CD4-positive, alpha-beta memory T cell (primary cell): ENCODE measurements at regions of chr7 and their contacts with region 1.

Region 1: GRCh38 chr7:39589323-39590111 is 23.3 kb downstream of the YAE1 start:
- DNase-seq: peak; percentile 62 to 94 (median 68)
- H3K4me3 ChIP-seq: no peak overlapping the region
- H3K4me3 Mint-ChIP-seq: peak overlapping the region in 7 of 8 donors; percentile 19 to 73 (median 52)
- H3K27ac ChIP-seq: no peak overlapping the region
- H3K27ac Mint-ChIP-seq: peak overlapping the region; percentile 63 to 92 (median 78)
- H3K4me1 ChIP-seq: peaks cover 34% of the 10 kb centered on the region
- H3K4me1 Mint-ChIP-seq: peaks cover 15 to 47% (median 18%) of the 10 kb centered on the region in 4 donors
- H3K27me3 ChIP-seq: no peaks in the 10 kb centered on the region
- H3K27me3 Mint-ChIP-seq: no peaks in the 10 kb centered on the region

Region 2: GRCh38 chr7:39609113-39609934 is 19.8 kb after region 1 on chr7:
- CTCF ChIA-PET with region 1: interaction called, 3 read pairs
- POLR2A ChIA-PET with region 1: interaction called, 8 read pairs
- intact Hi-C with region 1: loop called (anchors 2 kb)
- DNase-seq: no peak
- H3K4me3 ChIP-seq: no peak overlapping the region
- H3K4me3 Mint-ChIP-seq: peak overlapping the region; percentile 36 to 71 (median 61)
- H3K27ac ChIP-seq: no peak overlapping the region
- H3K27ac Mint-ChIP-seq: peak overlapping the region in 6 of 7 donors; percentile 11 to 77 (median 34)
- H3K4me1 ChIP-seq: peaks cover 44% of the 10 kb centered on the region
- H3K4me1 Mint-ChIP-seq: peaks cover 26 to 51% (median 35%) of the 10 kb centered on the region in 4 donors
- H3K27me3 ChIP-seq: no peaks in the 10 kb centered on the region
- H3K27me3 Mint-ChIP-seq: peaks cover 16 to 25% of the 10 kb centered on the region in 2 donors

Region 3: DNA sequence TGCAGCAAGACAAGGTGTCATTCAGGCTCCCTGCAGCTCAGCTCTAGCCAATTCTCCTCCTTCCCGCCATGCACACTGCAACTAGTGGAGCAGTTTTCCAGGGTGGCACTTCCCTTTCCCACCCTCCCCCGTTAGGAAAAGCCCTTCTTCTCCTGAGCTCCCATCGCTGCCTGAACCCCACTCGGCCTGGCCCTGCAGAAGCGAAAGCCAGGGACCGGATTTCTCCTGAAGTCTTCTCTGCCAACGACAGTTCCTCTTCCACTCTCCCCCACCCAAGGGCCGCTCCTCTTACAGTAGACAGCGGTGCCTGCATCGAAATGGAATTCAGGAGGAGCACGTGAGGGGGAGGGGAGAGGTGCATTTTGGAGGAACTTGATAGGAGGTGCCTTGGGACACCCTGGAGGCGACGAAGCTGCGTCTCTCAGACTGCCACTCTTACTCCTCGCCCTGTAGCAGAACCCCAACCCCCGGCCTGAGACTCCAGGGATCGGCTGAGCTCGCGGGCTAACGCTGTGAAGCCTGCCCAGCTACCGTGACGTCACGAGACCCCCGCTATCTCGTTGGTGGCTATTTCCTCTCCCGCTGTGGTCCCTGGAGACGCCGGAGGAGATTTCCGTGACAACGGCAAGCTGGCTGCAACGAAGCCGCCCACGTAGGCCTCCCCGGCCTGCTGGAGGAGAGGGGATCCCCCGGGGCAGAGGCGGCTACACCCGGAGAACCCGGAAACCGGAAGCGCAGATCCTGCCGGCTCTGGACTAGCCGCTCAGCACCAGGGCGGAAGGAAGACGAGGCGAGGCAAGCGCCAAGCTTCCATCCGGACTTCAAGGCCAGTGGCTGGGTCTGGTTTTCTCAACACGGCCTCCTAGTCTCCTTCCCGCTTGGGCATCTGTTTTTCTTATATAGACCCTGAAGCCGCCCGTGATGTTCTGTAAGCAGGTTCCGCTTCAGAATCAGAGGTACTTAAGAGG is 143.6 kb after region 1 on chr7:
- CTCF ChIA-PET with region 1: interaction called, 3 read pairs
- POLR2A ChIA-PET with region 1: interaction called, 11 read pairs
- intact Hi-C with region 1: no loop called
- DNase-seq: peak; percentile 87 to 97 (median 94)
- H3K4me3 ChIP-seq: peak overlapping the region; percentile 37 to 84
- H3K4me3 Mint-ChIP-seq: peak overlapping the region; percentile 90 to 100 (median 96)
- H3K27ac ChIP-seq: peak overlapping the region; percentile 88
- H3K27ac Mint-ChIP-seq: peak overlapping the region; percentile 94 to 100 (median 97)
- H3K4me1 ChIP-seq: peaks cover 41% of the 10 kb centered on the region
- H3K4me1 Mint-ChIP-seq: peaks cover 23 to 56% (median 39%) of the 10 kb centered on the region in 4 donors
- H3K27me3 ChIP-seq: no peaks in the 10 kb centered on the region
- H3K27me3 Mint-ChIP-seq: peaks cover 0 to 1% of the 10 kb centered on the region in 2 donors